Ascending aorta (tissue), 2 donors: ENCODE measurements at regions of chr4 and their contacts with region 1.

Region 1: DNA sequence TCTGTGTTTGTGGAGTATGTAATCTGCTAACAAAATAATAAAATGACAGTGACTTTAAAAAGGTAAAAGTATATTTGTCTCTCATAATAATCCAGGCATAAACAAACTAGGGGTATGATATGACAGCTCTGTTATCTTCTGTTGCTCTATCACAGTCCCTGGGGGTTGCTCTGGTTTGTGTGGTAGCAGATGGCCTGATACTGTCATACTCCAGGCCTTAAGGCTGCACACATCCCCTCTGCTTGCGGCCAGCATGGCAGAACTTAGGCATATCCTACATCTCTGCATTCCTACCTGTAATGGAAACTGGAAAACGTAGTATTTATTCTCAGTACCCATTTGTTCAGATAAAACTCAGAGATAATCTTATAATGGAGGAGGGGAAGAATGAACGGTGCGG is 117.9 kb upstream of the HAND2 start:
- DNase-seq: no peak
- H3K4me3 ChIP-seq: no peak overlapping the region
- H3K27ac ChIP-seq: no peak overlapping the region
- H3K4me1 ChIP-seq: peaks cover 0 to 2% of the 10 kb centered on the region in 2 donors
- H3K27me3 ChIP-seq: no peaks in the 10 kb centered on the region
- CTCF ChIP-seq: no peak

Region 2: DNA sequence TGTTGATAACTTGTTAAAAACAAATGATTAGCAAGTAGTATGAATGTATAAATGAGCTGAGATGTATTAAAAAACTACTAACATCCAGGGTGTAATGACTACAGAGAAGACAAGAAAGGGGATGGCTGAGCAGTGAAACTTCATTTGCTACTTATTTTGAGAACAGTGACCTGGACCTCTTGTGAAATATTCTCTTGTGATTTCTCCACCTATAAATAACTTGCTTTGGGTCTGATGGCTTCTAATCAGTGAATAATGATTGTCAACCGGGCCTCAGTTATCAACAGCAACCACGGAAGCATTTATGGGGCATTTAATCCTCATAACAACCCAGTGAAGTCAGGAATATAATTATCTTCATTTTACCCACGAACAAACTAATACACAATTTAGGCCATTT is 36.3 kb after region 1 on chr4:
- intact Hi-C with region 1: loop called (anchors 5 kb)
- DNase-seq: no peak
- H3K4me3 ChIP-seq: no peak overlapping the region
- H3K27ac ChIP-seq: no peak overlapping the region
- H3K4me1 ChIP-seq: peaks cover 0 to 3% of the 10 kb centered on the region in 2 donors
- H3K27me3 ChIP-seq: no peaks in the 10 kb centered on the region
- CTCF ChIP-seq: no peak